ENCODE measurements at regions of chr1 and their contacts with region 1.

Region 1: DNA sequence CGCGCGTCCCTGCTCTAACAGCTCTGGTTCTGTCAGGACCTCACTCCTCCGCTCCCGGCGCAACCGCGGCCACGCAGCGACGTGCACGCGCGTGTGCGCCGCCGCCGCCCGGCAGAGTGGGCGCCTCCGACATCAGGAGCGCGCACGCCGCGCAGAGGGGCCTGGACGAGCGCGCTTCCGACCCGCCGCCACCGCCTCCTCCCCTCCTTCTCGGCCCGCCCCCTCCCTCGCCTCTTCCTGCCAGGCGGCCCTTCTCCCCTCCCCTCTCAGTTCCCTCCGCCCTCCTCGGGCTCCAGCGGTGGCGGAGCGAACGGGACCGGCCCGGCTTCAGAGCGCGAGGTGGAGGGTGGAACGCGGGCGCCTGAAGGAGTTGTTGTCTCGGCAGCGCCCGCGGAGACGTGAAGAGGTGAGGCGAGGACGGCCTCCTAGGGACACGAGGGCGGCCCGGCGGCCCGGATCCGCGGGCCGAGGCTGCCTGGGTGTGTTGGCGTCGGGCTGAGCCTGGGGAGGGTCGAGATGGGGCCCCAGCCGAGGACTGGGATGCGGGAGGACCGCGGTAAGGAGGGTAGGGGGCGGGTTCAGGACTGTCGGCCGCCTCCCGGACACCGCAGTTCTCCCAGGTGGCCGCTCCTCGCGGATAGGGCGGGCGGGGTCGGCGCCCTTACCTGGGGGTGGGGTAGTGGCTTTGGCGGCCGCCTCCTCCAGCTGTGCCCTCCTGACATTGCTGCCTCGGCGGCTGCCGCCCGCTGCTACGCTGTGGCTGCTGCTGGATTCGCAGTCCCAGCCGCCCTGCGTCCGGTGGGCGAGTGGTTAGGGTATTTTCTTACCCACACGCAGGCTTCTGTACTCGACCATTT is at the start of gene RABGAP1L:
- DNase-seq: peak; percentile 95
- H3K4me3 Mint-ChIP-seq: peak within 1 kb of the TSS; percentile 99
- H3K27ac Mint-ChIP-seq: peak within 1 kb of the TSS; percentile 94
- H3K4me1 Mint-ChIP-seq: peaks cover 60% of the 10 kb centered on the region
- H3K27me3 Mint-ChIP-seq: no peaks in the 10 kb centered on the region
- total RNA-seq, gene RABGAP1L: 30.5 to 30.9 TPM

Region 2: DNA sequence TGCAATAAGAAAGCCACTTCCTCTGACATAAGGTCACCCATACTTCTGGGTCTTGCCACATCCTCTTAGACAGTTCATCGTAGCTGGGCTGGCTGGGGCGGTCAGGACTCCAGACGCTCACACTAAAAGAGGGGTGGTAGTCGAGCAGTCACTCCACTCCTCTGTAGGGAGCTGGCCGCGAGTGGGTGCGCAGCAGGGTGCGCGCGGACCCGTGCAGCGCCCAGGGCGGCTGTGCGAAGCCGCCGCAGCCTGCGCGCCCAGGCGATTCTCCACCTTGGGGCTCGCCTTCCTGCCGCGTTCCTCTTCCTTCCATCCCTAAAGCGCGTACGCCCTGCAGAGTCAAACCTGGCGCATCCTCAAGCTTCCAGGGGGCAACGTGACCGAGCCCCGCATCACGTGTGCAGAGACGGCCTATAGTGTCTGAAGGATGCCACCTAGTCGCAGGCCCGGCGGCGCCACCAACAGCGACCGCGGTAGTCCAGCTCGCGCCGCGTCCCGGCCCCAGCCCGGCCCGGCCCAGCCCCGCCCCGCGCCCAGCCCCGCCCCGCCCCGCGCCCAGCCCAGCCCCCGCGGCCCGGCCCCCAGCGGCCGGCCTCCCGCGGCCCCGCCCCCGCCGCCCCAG is 682.7 kb before region 1 on chr1:
- CTCF ChIA-PET with region 1: no interaction called
- POLR2A ChIA-PET with region 1: no interaction called
- intact Hi-C with region 1: loop called (anchors 10 kb)
- DNase-seq: peak; percentile 90
- H3K4me3 Mint-ChIP-seq: peak overlapping the region; percentile 84
- H3K27ac Mint-ChIP-seq: peak overlapping the region; percentile 90
- H3K4me1 Mint-ChIP-seq: peaks cover 53% of the 10 kb centered on the region
- H3K27me3 Mint-ChIP-seq: no peaks in the 10 kb centered on the region

Region 3: GRCh38 chr1:174022080-174022975 is 137.2 kb before region 1 on chr1 and contains the start of gene RC3H1:
- CTCF ChIA-PET with region 1: no interaction called
- POLR2A ChIA-PET with region 1: no interaction called
- intact Hi-C with region 1: loop called (anchors 2 kb)
- DNase-seq: peak; percentile 94
- H3K4me3 Mint-ChIP-seq: peak within 1 kb of the TSS; percentile 97
- H3K27ac Mint-ChIP-seq: peak within 1 kb of the TSS; percentile 93
- H3K4me1 Mint-ChIP-seq: peaks cover 38% of the 10 kb centered on the region
- H3K27me3 Mint-ChIP-seq: no peaks in the 10 kb centered on the region
- total RNA-seq, gene RC3H1: 26.6 to 26.8 TPM

Region 4: GRCh38 chr1:174174461-174175329 is 15.2 kb after region 1 on chr1:
- CTCF ChIA-PET with region 1: interaction called, 3 read pairs
- POLR2A ChIA-PET with region 1: interaction called, 5 read pairs
- intact Hi-C with region 1: loop called (anchors 1 kb)
- DNase-seq: peak; percentile 71
- H3K4me3 Mint-ChIP-seq: no peak overlapping the region
- H3K27ac Mint-ChIP-seq: peak overlapping the region; percentile 61
- H3K4me1 Mint-ChIP-seq: peaks cover 46% of the 10 kb centered on the region
- H3K27me3 Mint-ChIP-seq: no peaks in the 10 kb centered on the region

Region 5: GRCh38 chr1:174217787-174218574 is 58.5 kb after region 1 on chr1:
- CTCF ChIA-PET with region 1: no interaction called
- POLR2A ChIA-PET with region 1: no interaction called
- intact Hi-C with region 1: loop called (anchors 2 kb)
- DNase-seq: no peak
- H3K4me3 Mint-ChIP-seq: no peak overlapping the region
- H3K27ac Mint-ChIP-seq: no peak overlapping the region
- H3K4me1 Mint-ChIP-seq: peaks cover 11% of the 10 kb centered on the region
- H3K27me3 Mint-ChIP-seq: no peaks in the 10 kb centered on the region

Measured in activated CD4-positive, alpha-beta memory T cell treated with anti-CD3 and anti-CD28 coated beads for 36 hours (primary cell).